ENCODE measurements at regions of chrX and their contacts with region 1.

Region 1: DNA sequence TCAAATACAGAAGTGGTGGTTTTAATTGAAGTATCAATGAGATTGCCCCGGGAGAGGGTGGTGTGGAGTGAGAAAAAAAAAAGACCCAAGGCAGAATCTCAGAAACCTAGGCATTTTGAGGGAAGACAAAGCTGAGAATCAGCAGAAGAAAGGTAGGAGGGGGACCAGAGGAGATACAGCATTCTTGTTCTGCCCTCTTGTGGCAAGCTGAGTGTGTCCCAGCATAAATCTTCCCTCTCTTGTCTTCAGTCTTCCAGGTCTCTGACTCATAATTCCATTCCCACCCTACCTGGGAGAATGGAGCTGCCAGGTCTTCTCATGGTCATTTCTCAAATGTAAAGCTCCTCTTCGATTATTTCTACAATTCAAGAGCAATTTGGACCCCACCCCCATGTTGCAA is 32.7 kb upstream of the MAGED1 start:
- H3K4me3 ChIP-seq: no peak overlapping the region
- H3K27ac ChIP-seq: no peak overlapping the region
- H3K4me1 ChIP-seq: no peaks in the 10 kb centered on the region
- CTCF ChIP-seq: no peak

Region 2: DNA sequence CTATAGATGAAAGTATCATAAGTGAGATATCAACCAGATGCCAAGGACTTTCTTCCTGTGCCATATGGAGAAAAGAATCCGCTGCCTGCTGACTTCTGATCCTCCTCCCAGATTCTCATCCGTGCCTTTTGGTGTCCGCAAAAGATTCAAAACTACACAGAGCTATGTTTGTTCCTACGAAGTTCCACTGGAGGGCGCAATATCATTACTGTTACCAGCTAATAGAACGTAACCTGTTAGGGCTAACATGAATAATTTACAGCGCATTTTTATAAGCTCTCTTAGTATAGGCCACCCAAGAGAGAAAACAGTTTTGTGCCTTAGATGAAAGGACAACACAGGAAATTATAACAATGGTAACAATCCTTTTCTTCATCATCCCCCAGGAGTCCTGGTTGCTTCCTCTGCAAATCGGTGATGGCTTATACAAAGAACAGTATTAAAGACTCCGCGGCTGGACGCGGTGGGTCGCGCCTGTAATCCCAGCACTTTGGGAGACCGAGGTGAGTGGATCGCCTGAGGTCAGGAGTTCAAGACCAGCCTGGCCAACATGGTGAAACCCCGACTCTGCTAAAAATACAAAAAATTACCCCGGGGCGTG is 219.2 kb before region 1 on chrX:
- CTCF ChIA-PET with region 1: interaction called, 35 read pairs
- POLR2A ChIA-PET with region 1: no interaction called
- H3K4me3 ChIP-seq: no peak overlapping the region
- H3K27ac ChIP-seq: no peak overlapping the region
- H3K4me1 ChIP-seq: no peaks in the 10 kb centered on the region
- CTCF ChIP-seq: no peak

Region 3: DNA sequence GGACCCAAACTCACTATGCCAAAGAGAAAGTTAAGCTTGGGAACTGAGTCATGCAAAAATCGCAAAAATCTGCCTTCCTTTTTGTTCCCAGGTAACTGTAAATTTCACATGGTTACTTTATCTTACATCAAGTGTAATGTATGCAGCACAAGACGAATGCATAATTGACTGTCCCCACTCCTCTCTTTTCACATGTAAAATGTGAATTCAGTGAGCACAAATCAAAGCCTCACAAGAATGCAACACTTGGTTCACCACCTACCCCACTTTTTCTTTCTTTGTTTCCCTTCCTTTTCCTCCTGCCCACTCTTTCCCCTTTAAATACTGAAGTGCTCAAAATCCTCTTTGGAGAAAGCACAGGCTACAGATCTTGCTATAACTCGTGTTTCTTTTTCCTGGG is 155.1 kb after region 1 on chrX:
- CTCF ChIA-PET with region 1: no interaction called
- POLR2A ChIA-PET with region 1: no interaction called
- H3K4me3 ChIP-seq: no peak overlapping the region
- H3K27ac ChIP-seq: no peak overlapping the region
- H3K4me1 ChIP-seq: no peaks in the 10 kb centered on the region
- CTCF ChIP-seq: no peak